Transverse colon (tissue), 4 donors: ENCODE measurements at regions of chr7 and their contacts with region 1.

Region 1: DNA sequence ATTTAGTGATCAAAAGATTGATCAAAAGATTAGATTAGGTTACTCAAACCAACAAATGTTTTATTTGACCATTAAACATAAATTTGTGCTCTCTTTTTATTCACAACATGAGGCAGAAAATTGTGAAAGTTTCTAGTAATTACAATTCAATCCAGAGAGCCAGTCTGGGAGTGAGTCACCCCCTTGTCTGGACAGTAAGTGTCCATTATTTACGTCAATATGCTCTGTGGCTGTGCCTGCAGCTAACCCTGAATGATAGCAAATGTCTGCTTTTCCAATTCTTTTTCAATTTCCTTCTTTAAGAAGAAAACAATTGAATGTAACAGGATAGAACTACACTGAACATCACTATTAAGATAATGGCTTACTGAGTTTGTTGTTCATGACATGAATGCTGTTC is 27.9 kb downstream of the GNG11 start:
- DNase-seq: no peak
- H3K4me3 ChIP-seq: no peak overlapping the region
- H3K27ac ChIP-seq: no peak overlapping the region
- H3K4me1 ChIP-seq: no peaks in the 10 kb centered on the region
- H3K27me3 ChIP-seq: no peaks in the 10 kb centered on the region
- CTCF ChIP-seq: no peak
- EP300 ChIP-seq: no peak
- POLR2A ChIP-seq: no peak

Region 2: DNA sequence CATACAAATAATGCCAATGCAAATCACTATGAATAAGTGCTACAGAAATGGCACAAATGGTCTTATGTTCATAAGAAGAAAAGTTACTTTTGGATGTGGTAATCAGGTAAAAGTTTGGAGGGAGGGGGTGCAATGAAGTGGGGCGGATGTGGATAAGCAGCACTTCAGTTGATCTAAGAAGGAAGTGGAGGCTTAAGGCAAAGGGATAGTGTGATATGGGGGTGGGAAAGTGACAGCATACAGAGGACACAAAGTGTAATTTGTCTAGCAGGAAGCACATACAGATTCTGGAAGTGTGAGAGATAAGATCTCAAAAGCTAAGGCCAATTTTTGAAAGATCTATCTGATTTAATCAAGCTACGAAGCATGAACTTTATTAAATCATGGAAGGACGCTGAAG is 48.4 kb after region 1 on chr7:
- in situ Hi-C with region 1: no loop called
- intact Hi-C with region 1: loop called (anchors 5 kb)
- DNase-seq: no peak
- H3K4me3 ChIP-seq: no peak overlapping the region
- H3K27ac ChIP-seq: no peak overlapping the region
- H3K4me1 ChIP-seq: peaks cover 0 to 10% (median 5%) of the 10 kb centered on the region in 4 donors
- H3K27me3 ChIP-seq: no peaks in the 10 kb centered on the region
- CTCF ChIP-seq: no peak
- EP300 ChIP-seq: no peak
- POLR2A ChIP-seq: no peak